HepG2 (cell line): ENCODE measurements at regions of chrX and their contacts with region 1.

Region 1: GRCh38 chrX:10077425-10078188 is 79.2 kb upstream of the CLCN4 start:
- DNase-seq: peak; percentile 79
- ATAC-seq: peak; percentile 78
- H3K4me3 ChIP-seq: no peak overlapping the region
- H3K27ac ChIP-seq: peak overlapping the region; percentile 59
- H3K4me1 ChIP-seq: peaks cover 35% of the 10 kb centered on the region
- H3K27me3 ChIP-seq: no peaks in the 10 kb centered on the region
- CTCF ChIP-seq: no peak
- EP300 ChIP-seq: peak in 1 of 2 experiments; percentile 40; a peak in 1 of 4 replicates
- POLR2A ChIP-seq: no peak
- RAD21 ChIP-seq: no peak

Region 2: DNA sequence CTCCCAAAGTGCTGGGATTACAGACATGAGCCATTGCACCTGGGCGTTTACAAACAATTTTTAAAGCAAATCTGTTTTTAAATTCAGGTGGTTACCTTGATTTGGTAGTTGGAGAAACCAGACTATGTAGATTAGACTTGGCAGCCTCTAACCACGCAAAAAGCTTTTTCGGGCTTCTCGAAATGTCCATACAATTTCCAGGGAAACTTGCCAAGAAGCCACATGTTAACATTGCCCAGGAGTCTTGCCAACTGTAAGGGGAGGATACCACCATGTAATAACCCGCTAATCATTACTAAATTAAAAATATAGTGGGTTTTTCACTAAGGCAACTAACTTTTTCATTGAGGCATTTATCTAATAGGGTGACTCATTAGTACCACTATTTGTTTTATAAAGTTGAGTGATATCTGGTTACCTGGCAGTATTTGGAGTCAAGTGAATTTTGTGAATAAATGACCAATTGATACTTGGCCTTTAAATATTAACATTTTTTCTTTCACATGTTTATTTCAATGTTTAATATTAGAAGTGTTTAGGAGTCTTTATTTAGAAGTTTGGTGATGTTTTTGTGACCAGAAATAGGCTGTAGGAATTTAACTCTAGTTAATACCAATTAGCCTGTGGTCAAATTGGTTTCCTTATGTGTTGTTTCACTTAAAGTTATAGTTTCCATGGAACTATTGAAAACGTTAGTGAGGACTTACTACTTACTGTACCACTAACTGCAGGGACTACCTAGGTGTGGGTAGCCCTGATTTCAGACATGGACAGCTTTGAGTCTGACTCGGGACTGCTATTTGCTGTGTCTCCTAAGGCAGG is 49.1 kb before region 1 on chrX:
- CTCF ChIA-PET with region 1: no interaction called
- POLR2A ChIA-PET with region 1: no interaction called
- in situ Hi-C with region 1: no loop called
- intact Hi-C with region 1: loop called (anchors 5 kb)
- DNase-seq: no peak
- ATAC-seq: no peak
- H3K4me3 ChIP-seq: no peak overlapping the region
- H3K27ac ChIP-seq: no peak overlapping the region
- H3K4me1 ChIP-seq: peaks cover 32% of the 10 kb centered on the region
- H3K27me3 ChIP-seq: no peaks in the 10 kb centered on the region
- CTCF ChIP-seq: no peak
- EP300 ChIP-seq: no peak
- POLR2A ChIP-seq: no peak
- RAD21 ChIP-seq: no peak